ENCODE measurements at regions of chr12 and their contacts with region 1.

Region 1: GRCh38 chr12:68163560-68164081 is 4.1 kb upstream of the IFNG start:
- DNase-seq: peak; percentile 21
- ATAC-seq: peak; percentile 80
- H3K4me3 Mint-ChIP-seq: no peak overlapping the region
- H3K27ac Mint-ChIP-seq: no peak overlapping the region
- H3K4me1 Mint-ChIP-seq: peaks cover 9% of the 10 kb centered on the region
- H3K27me3 Mint-ChIP-seq: no peaks in the 10 kb centered on the region

Region 2: GRCh38 chr12:68180792-68181744 is 17.4 kb after region 1 on chr12:
- CTCF ChIA-PET with region 1: interaction called, 8 read pairs
- POLR2A ChIA-PET with region 1: interaction called, 4 read pairs
- intact Hi-C with region 1: loop called in 1 of 2 experiments (anchors 1 kb)
- DNase-seq: peak; percentile 69
- ATAC-seq: peak; percentile 91
- H3K4me3 Mint-ChIP-seq: peak overlapping the region; percentile 7
- H3K27ac Mint-ChIP-seq: peak overlapping the region; percentile 89
- H3K4me1 Mint-ChIP-seq: peaks cover 54% of the 10 kb centered on the region
- H3K27me3 Mint-ChIP-seq: peaks cover 2% of the 10 kb centered on the region

Region 3: DNA sequence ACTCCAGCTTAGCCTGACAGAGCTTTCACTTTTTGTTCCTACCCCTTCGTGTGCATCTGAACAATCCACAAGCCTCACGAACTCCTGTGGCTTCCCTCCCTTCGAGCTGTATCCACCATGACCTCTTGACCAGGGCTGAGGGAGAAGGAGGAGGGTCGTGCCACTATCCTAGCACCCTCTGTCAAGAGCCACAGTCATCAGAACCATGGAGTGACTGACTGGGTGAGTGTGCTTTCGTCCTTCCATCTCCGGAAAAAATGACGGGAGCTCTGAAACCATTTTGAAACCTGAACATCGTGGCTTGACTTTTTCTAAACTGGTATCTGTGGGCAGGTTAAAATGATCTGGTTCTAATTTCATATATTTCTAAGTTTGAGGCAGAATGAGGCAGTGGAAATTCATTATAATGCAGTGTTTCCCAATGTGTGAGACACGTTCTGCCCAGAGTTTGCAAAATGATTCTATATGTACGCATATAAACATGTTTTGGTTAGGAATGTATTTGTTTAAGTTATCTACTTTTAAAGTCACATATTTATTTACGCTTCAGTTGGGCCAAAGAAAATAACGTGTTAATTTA is 35.0 kb after region 1 on chr12:
- CTCF ChIA-PET with region 1: interaction called, 3 read pairs
- POLR2A ChIA-PET with region 1: no interaction called
- intact Hi-C with region 1: loop called in 1 of 2 experiments (anchors 5 kb)
- DNase-seq: peak; percentile 32
- ATAC-seq: peak; percentile 77
- H3K4me3 Mint-ChIP-seq: peak overlapping the region; percentile 40
- H3K27ac Mint-ChIP-seq: peak overlapping the region; percentile 83
- H3K4me1 Mint-ChIP-seq: peaks cover 42% of the 10 kb centered on the region
- H3K27me3 Mint-ChIP-seq: no peaks in the 10 kb centered on the region

Measured in activated CD4-positive, alpha-beta T cell treated with anti-CD3 and anti-CD28 coated beads for 36 hours (primary cell).